HepG2 (cell line): ENCODE measurements at regions of chr11 and their contacts with region 1.

Region 1: DNA sequence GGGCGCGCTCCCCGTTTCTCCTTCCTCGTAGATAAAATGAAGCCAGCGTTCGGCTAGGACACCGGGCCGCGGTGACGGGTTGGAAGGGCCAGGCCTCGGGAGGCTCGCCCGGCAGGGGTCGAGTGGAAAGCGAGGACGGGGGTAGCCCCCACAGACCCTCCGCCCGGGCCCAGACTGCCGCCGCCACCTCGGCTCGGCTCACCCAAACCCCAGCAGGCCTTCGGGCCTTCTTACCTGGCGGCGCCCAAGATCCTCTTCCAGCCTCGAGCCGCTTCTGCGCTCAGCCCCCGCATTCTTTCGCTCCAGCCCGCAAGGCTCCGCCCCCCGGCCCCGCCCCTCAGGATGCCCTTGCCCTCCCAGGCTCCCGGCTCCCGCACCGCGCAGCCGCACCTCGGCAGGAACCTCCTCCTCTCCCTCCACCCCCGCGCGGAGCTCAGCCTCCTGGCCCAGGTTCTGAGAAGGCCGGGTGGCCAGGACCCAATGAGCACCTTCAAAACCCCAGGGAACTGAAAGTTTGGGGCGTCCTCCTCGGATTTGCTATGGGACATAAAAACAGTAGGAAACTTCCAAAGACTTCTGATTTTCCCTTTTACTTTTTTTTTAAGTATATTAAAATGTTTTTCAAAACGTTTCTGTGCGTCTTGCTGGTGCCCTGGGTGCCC is at the start of gene CD59:
- DNase-seq: peak; percentile 85
- ATAC-seq: peak; percentile 95
- H3K4me3 ChIP-seq: peak within 1 kb of the TSS; percentile 80 to 93 (median 92)
- H3K27ac ChIP-seq: peak within 1 kb of the TSS; percentile 84
- H3K4me1 ChIP-seq: peaks cover 57% of the 10 kb centered on the region
- H3K27me3 ChIP-seq: no peaks in the 10 kb centered on the region; a peak in 1 of 5 replicates
- CTCF ChIP-seq: peak; percentile 18; the same call in 1 of the 2 replicates
- EP300 ChIP-seq: no peak
- POLR2A ChIP-seq: peak; percentile 87 to 91
- RAD21 ChIP-seq: no peak
- total RNA-seq, gene CD59: 184 and 289 TPM in 2 replicates

Region 2: DNA sequence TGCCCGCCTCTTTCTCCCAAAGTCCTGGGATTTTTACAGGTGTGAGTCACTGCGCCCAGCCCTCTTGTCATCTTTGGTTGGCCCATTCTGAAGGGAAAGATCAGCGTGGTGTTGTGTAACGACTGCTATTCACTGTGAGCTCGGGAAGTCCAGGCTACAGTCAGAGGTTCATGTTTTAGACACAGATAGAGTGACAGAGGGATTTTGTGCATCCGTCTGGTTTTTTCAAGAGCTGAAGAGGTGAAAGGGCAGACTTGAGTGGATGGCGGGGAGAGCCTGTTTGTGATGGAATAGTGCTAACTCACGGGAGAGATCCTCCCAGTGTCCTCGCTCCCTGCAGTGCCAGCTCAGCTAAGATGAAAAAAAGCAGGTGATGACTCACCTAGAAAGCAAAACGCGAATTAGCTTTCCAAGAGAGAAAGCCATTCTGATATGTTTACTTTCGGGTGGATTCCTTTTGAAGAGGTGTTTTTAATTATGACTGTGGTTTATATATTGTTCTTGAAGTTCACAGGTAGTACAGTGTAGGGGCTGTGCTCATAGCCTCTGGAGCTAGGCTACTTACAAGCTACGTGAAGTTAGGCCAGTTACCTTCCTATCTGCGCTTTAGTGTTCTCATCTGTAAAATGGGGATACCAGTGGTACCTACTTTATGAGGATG is 102.9 kb before region 1 on chr11:
- CTCF ChIA-PET with region 1: no interaction called
- POLR2A ChIA-PET with region 1: no interaction called
- in situ Hi-C with region 1: no loop called
- intact Hi-C with region 1: no loop called
- DNase-seq: peak; percentile 82
- ATAC-seq: peak; percentile 88
- H3K4me3 ChIP-seq: no peak overlapping the region
- H3K27ac ChIP-seq: no peak overlapping the region
- H3K4me1 ChIP-seq: peaks cover 14% of the 10 kb centered on the region
- H3K27me3 ChIP-seq: peaks cover 1 to 20% of the 10 kb centered on the region in 2 experiments; a peak in 3 of 5 replicates
- CTCF ChIP-seq: no peak
- EP300 ChIP-seq: no peak
- POLR2A ChIP-seq: no peak
- RAD21 ChIP-seq: no peak

Region 3: GRCh38 chr11:33687733-33688479 is 48.4 kb before region 1 on chr11:
- CTCF ChIA-PET with region 1: no interaction called
- POLR2A ChIA-PET with region 1: interaction called, 21 read pairs
- in situ Hi-C with region 1: no loop called
- intact Hi-C with region 1: loop called (anchors 1 kb)
- DNase-seq: peak; percentile 60
- ATAC-seq: peak; percentile 47
- H3K4me3 ChIP-seq: no peak overlapping the region
- H3K27ac ChIP-seq: no peak overlapping the region
- H3K4me1 ChIP-seq: peaks cover 34% of the 10 kb centered on the region
- H3K27me3 ChIP-seq: no peaks in the 10 kb centered on the region
- CTCF ChIP-seq: peak; percentile 86
- EP300 ChIP-seq: no peak
- POLR2A ChIP-seq: no peak
- RAD21 ChIP-seq: peak; percentile 74

Region 4: DNA sequence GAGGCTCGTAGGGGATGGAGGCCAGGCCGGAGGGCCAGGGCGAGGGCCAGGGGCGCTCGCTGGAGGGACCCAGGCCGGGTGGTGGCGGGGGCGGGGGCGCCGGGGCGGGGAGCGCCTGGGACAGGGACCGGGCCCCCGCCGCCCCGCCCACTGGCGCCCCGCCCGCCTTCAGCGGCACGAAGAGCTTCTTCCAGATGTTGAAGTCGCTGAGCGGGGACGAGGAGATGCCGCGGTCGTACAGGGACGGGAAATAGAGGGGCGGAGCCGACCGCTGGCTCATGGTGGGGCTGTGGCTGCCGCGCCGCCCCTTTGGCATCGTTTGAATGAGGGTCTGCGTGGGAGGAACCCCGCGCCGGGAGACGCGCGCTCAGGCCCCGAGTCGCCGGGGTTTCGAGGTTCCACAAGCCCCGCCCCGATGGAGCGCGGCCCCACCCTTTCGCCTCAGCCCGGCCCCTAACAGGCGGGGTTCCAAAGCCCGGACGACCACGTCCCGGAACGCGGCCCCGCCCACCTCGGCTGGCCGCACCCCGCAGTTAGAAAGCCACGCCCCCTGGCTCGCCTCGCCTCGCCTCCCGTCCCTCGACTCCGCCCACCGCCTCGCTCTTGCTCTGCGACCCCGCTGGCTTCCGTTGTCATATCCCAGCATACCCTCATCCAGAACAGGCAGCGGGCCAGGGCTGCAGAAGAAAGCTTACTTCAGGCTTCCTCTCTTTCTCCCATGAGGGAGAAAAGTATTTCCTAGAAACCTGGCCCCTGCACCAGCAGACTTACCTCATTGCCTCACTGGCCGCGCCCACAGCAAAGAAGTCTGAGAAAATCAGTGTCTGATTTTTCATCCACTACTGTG is 35.6 kb before region 1 on chr11 and contains the start of gene C11orf91:
- CTCF ChIA-PET with region 1: no interaction called
- POLR2A ChIA-PET with region 1: interaction called, 63 read pairs
- in situ Hi-C with region 1: no loop called
- intact Hi-C with region 1: no loop called
- DNase-seq: peak; percentile 87
- ATAC-seq: peak; percentile 72
- H3K4me3 ChIP-seq: peak within 1 kb of the TSS; percentile 64 to 77 (median 75)
- H3K27ac ChIP-seq: peak within 1 kb of the TSS; percentile 97
- H3K4me1 ChIP-seq: peaks cover 79% of the 10 kb centered on the region
- H3K27me3 ChIP-seq: no peaks in the 10 kb centered on the region
- CTCF ChIP-seq: 0 out of 2 replicates have a peak, but pooled peaks have one; percentile 4
- EP300 ChIP-seq: no peak
- POLR2A ChIP-seq: peak; percentile 66 to 80
- RAD21 ChIP-seq: peak; percentile 13; the same call in 1 of the 2 replicates
- total RNA-seq, gene C11orf91: 0.35 TPM in 1 of 2 replicates, not detected in the other

Region 5: DNA sequence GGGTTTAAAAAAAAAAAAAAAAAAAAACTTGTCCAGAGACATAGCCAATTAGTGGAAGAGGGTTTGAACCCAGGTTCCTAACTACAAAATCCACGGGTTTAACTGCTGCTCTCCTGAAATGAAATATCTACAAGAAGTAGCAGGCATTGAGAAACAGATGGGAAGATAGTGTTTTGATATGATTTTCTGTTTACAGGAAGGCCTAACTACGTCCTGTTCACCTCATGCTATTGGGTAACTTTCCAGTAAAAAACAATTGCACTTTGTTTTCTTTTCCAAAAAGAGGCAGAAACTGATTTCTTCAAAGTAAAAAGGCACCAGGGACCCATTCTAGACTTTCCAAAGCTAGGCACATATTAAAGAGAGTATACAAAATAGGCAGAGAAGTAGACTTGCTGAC is 29.7 kb before region 1 on chr11:
- CTCF ChIA-PET with region 1: no interaction called
- POLR2A ChIA-PET with region 1: interaction called, 63 read pairs
- in situ Hi-C with region 1: no loop called
- intact Hi-C with region 1: no loop called
- DNase-seq: no peak
- ATAC-seq: no peak
- H3K4me3 ChIP-seq: no peak overlapping the region
- H3K27ac ChIP-seq: peak overlapping the region; percentile 58
- H3K4me1 ChIP-seq: peaks cover 68% of the 10 kb centered on the region
- H3K27me3 ChIP-seq: no peaks in the 10 kb centered on the region
- CTCF ChIP-seq: no peak
- EP300 ChIP-seq: 0 out of 4 replicates have a peak, but pooled peaks of 1 of the 2 experiments have one; percentile 13
- POLR2A ChIP-seq: no peak
- RAD21 ChIP-seq: no peak

Region 6: DNA sequence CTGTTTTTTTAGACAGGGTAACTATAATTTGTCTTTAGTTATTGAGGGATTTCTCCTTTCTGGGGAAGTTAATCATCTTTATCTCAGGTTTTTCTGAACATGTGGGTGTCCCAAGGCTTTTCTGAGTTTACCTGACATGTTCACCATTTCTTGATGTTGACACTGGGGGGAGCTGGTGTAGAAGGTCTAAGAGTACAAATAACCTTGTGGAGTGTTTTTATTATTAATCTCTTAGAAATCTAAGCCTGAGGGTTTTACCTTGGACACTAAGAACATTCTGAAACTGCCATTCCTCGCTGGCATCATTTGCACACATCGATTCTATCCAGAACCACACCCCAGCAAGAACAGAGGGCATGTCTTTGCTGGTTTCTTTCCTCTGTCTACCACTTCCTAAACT is 20.0 kb before region 1 on chr11:
- CTCF ChIA-PET with region 1: interaction called, 4 read pairs
- POLR2A ChIA-PET with region 1: interaction called, 11 read pairs
- in situ Hi-C with region 1: no loop called
- intact Hi-C with region 1: no loop called
- DNase-seq: no peak
- ATAC-seq: peak; percentile 53
- H3K4me3 ChIP-seq: no peak overlapping the region
- H3K27ac ChIP-seq: no peak overlapping the region
- H3K4me1 ChIP-seq: peaks cover 15% of the 10 kb centered on the region
- H3K27me3 ChIP-seq: no peaks in the 10 kb centered on the region
- CTCF ChIP-seq: peak; percentile 44
- EP300 ChIP-seq: no peak
- POLR2A ChIP-seq: no peak
- RAD21 ChIP-seq: no peak

Region 7: GRCh38 chr11:33723238-33723887 is 12.9 kb before region 1 on chr11:
- CTCF ChIA-PET with region 1: no interaction called
- POLR2A ChIA-PET with region 1: interaction called, 12 read pairs
- in situ Hi-C with region 1: no loop called
- intact Hi-C with region 1: no loop called
- DNase-seq: no peak
- ATAC-seq: peak; percentile 15
- H3K4me3 ChIP-seq: no peak overlapping the region
- H3K27ac ChIP-seq: peak overlapping the region; percentile 66
- H3K4me1 ChIP-seq: peaks cover 35% of the 10 kb centered on the region
- H3K27me3 ChIP-seq: no peaks in the 10 kb centered on the region
- CTCF ChIP-seq: no peak
- EP300 ChIP-seq: no peak
- POLR2A ChIP-seq: no peak
- RAD21 ChIP-seq: no peak

Region 8: GRCh38 chr11:33773987-33774735 is 37.9 kb after region 1 on chr11 and contains the start of gene FBXO3:
- CTCF ChIA-PET with region 1: no interaction called
- POLR2A ChIA-PET with region 1: no interaction called
- in situ Hi-C with region 1: no loop called
- intact Hi-C with region 1: loop called (anchors 5 kb)
- DNase-seq: peak; percentile 71
- ATAC-seq: peak; percentile 90
- H3K4me3 ChIP-seq: peak within 1 kb of the TSS; percentile 77 to 98 (median 87)
- H3K27ac ChIP-seq: peak within 1 kb of the TSS; percentile 33
- H3K4me1 ChIP-seq: peaks cover 38% of the 10 kb centered on the region
- H3K27me3 ChIP-seq: peaks cover 0 to 30% of the 10 kb centered on the region in 2 experiments; a peak in 2 of 5 replicates
- CTCF ChIP-seq: no peak
- EP300 ChIP-seq: no peak
- POLR2A ChIP-seq: peak; percentile 50 to 83; a peak in 3 of 4 replicates
- RAD21 ChIP-seq: no peak
- total RNA-seq, gene FBXO3: 27.6 and 45.5 TPM in 2 replicates

Region 9: GRCh38 chr11:34044664-34045485 is 308.6 kb after region 1 on chr11:
- CTCF ChIA-PET with region 1: no interaction called
- POLR2A ChIA-PET with region 1: no interaction called
- in situ Hi-C with region 1: no loop called
- intact Hi-C with region 1: no loop called
- DNase-seq: no peak
- ATAC-seq: no peak
- H3K4me3 ChIP-seq: no peak overlapping the region
- H3K27ac ChIP-seq: no peak overlapping the region
- H3K4me1 ChIP-seq: peaks cover 4% of the 10 kb centered on the region; the same call in 1 of the 2 replicates
- H3K27me3 ChIP-seq: no peaks in the 10 kb centered on the region
- CTCF ChIP-seq: no peak
- EP300 ChIP-seq: no peak
- POLR2A ChIP-seq: no peak
- RAD21 ChIP-seq: no peak